Activated CD4-positive, alpha-beta T cell treated with anti-CD3 and anti-CD28 coated beads for 36 hours (primary cell): ENCODE measurements at regions of chr2 and their contacts with region 1.

Region 1: DNA sequence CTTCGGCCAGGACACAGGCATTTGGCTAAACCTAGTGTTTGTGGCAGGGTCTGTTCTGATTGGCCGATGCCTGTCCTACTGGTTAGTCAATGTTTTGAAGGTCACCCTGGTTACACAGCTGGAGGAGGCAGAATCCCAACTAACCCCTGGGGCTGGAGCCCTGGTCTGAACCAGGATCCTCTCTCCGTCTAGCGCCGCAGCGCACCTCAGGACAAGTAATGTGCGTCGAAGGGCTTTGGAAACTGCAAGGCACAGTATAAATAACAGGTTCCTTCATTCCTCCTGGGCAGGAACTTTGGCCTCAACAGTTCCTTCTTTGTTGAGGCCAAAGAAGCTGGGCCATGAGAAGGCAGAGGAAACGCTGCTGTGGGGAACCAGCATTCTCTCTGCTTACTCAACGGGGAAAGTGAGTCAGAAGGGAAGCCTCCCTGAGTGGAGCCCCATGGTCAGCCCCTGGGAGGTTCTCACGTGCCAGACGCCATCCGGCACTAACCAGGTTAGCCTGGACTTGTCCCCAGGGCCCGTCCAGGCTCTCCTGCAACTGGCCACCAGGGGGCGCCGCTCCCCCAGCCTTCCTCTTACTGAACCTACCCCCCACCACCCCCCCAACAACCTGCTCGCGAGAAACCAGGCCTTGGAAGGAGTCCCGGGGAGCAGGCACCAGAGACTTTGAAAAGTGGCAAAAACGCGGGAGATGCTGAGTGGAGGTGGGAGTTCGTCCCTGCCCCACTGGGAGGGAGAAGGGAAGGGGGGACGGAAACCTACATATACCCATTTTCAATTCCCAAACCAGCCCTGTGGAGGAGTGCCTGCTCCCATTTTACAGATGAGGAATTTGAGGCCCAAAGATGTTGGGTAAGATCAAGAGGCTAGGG is 19.8 kb downstream of the TEX44 start:
- DNase-seq: peak; percentile 99
- ATAC-seq: peak; percentile 67
- H3K4me3 Mint-ChIP-seq: peak overlapping the region; percentile 77
- H3K27ac Mint-ChIP-seq: peak overlapping the region; percentile 98
- H3K4me1 Mint-ChIP-seq: peaks cover 52% of the 10 kb centered on the region
- H3K27me3 Mint-ChIP-seq: no peaks in the 10 kb centered on the region

Region 2: GRCh38 chr2:231482806-231483391 is 129.5 kb before region 1 on chr2:
- CTCF ChIA-PET with region 1: interaction called, 10 read pairs
- POLR2A ChIA-PET with region 1: no interaction called
- intact Hi-C with region 1: no loop called
- DNase-seq: peak; percentile 85
- ATAC-seq: peak; percentile 83
- H3K4me3 Mint-ChIP-seq: peak overlapping the region; percentile 79
- H3K27ac Mint-ChIP-seq: peak overlapping the region; percentile 87
- H3K4me1 Mint-ChIP-seq: peaks cover 7% of the 10 kb centered on the region
- H3K27me3 Mint-ChIP-seq: no peaks in the 10 kb centered on the region

Region 3: DNA sequence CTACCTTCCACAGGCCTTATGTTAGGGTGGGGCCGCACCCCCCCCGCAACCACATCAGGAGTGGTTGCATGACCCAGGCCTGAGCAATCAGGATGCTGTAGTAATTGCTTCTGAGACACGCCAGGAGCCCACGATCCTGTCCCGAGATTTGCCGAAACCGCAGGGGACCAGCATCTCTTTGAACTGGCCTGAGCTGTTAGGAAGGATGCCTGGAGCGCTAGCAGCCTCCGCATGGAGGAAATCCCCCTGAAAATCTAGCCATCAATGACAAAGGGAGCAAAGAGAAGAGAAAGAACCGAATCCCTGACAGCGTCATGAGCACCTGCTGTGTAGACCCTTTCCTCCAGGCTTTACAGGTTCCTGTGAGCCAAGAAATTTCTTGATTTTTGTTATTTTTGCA is 28.4 kb before region 1 on chr2:
- CTCF ChIA-PET with region 1: no interaction called
- POLR2A ChIA-PET with region 1: no interaction called
- intact Hi-C with region 1: no loop called
- DNase-seq: no peak
- ATAC-seq: no peak
- H3K4me3 Mint-ChIP-seq: no peak overlapping the region
- H3K27ac Mint-ChIP-seq: no peak overlapping the region
- H3K4me1 Mint-ChIP-seq: no peaks in the 10 kb centered on the region
- H3K27me3 Mint-ChIP-seq: peaks cover 3% of the 10 kb centered on the region

Region 4: DNA sequence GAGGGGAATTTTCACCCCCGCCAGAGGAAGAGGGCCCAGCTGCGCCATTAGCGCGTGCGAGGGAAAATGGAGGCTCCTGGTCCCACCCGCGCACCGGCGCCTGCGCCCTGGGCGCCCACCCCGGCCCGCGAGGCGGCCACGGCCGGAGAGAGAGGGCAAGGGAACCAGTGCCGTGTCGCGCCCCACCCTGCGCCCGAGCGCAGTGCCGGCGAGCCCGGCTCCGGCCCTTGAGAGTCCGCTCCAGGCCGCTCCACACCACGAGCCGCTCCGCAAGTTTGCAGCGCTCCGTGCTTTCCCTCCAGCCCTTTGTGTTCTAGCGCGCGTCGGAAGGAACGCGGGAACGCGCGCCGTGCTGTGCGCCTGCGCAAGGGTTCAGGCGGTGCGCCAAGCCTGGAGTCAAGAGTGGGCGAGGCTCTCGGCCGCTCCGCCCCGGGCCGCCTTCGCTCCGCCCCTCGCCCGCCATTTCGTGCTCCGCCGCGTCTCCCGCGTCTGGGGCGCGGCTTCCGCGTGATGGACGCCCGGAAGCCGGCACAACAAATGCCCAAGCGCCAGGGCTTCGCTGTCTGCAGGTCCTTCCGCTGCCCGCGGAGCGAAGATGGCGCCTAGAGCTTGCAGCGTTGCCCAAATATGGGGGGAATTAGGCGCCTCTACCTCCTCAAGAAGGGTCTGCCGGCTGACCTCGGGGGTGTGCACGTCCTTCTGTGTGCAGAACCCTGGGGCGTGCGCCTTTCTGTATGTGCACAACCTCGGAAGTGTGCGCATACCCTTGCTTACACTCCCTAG is 49.8 kb after region 1 on chr2:
- CTCF ChIA-PET with region 1: interaction called, 4 read pairs
- POLR2A ChIA-PET with region 1: interaction called, 10 read pairs
- intact Hi-C with region 1: loop called (anchors 1 kb)
- DNase-seq: peak; percentile 98
- ATAC-seq: peak; percentile 92
- H3K4me3 Mint-ChIP-seq: peak overlapping the region; percentile 72
- H3K27ac Mint-ChIP-seq: peak overlapping the region; percentile 96
- H3K4me1 Mint-ChIP-seq: peaks cover 23% of the 10 kb centered on the region
- H3K27me3 Mint-ChIP-seq: no peaks in the 10 kb centered on the region

Region 5: GRCh38 chr2:231706731-231707624 is 94.6 kb after region 1 on chr2:
- CTCF ChIA-PET with region 1: interaction called, 161 read pairs
- POLR2A ChIA-PET with region 1: interaction called, 104 read pairs
- intact Hi-C with region 1: loop called (anchors 1 kb)
- DNase-seq: peak; percentile 99
- ATAC-seq: peak; percentile 59
- H3K4me3 Mint-ChIP-seq: peak overlapping the region; percentile 85
- H3K27ac Mint-ChIP-seq: peak overlapping the region; percentile 100
- H3K4me1 Mint-ChIP-seq: peaks cover 15% of the 10 kb centered on the region
- H3K27me3 Mint-ChIP-seq: peaks cover 2% of the 10 kb centered on the region

Region 6: DNA sequence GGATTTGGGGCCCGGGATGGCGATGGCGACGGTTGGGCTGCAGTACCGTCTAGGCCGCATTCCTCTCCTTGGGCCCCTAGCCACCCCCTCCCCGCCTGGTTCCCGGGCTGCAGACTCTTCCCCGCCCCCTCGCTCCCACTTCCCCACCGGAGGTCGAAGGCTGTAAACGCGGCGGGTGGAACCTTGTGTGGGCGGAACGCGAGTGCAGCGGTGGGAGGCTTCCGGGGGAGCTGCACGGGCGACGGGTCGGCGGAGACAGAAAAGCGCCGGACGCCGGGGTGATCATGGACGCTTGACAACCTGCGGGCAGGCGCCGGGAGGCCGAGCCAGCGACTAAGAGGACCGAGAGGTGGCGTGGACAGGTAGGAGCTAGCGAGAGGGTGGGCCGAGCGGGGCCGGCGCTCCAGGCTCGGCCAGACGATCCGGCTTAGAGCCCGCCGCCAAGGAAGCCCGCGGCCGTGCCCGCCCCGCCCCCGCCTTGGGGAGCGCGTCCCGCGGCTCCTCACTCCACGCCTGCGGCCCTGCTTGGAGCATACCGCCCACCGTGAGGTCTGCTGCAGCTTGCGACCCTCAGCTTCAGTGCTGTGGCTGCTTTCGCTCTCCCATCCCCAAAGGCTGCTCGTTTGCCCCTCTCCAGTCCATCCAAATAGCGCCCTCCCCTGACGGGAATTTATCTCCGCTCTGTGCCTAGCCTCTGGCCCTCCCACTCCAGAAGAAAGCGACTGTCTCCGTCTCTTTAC is 173.9 kb after region 1 on chr2 and contains the start of gene COPS7B:
- CTCF ChIA-PET with region 1: no interaction called
- POLR2A ChIA-PET with region 1: no interaction called
- intact Hi-C with region 1: loop called (anchors 1 kb)
- DNase-seq: peak; percentile 93
- ATAC-seq: peak; percentile 67
- H3K4me3 Mint-ChIP-seq: peak within 1 kb of the TSS; percentile 93
- H3K27ac Mint-ChIP-seq: peak within 1 kb of the TSS; percentile 89
- H3K4me1 Mint-ChIP-seq: peaks cover 65% of the 10 kb centered on the region
- H3K27me3 Mint-ChIP-seq: no peaks in the 10 kb centered on the region
- total RNA-seq, gene COPS7B: 51.8 to 53.6 TPM

Region 7: GRCh38 chr2:231951452-231952035 is 339.1 kb after region 1 on chr2:
- CTCF ChIA-PET with region 1: no interaction called
- POLR2A ChIA-PET with region 1: no interaction called
- intact Hi-C with region 1: no loop called
- DNase-seq: no peak
- ATAC-seq: no peak
- H3K4me3 Mint-ChIP-seq: no peak overlapping the region
- H3K27ac Mint-ChIP-seq: no peak overlapping the region
- H3K4me1 Mint-ChIP-seq: no peaks in the 10 kb centered on the region
- H3K27me3 Mint-ChIP-seq: peaks cover 12% of the 10 kb centered on the region

Region 8: GRCh38 chr2:232697100-232697865 is 1084.9 kb after region 1 on chr2 and contains the start of gene GIGYF2:
- CTCF ChIA-PET with region 1: no interaction called
- POLR2A ChIA-PET with region 1: no interaction called
- intact Hi-C with region 1: loop called in 1 of 2 experiments (anchors 5 kb)
- DNase-seq: peak; percentile 98
- ATAC-seq: peak; percentile 92
- H3K4me3 Mint-ChIP-seq: peak within 1 kb of the TSS; percentile 99
- H3K27ac Mint-ChIP-seq: peak within 1 kb of the TSS; percentile 87
- H3K4me1 Mint-ChIP-seq: peaks cover 36% of the 10 kb centered on the region
- H3K27me3 Mint-ChIP-seq: no peaks in the 10 kb centered on the region
- total RNA-seq, gene GIGYF2: 51.1 to 51.9 TPM